Activated CD4-positive, alpha-beta memory T cell treated with anti-CD3 and anti-CD28 coated beads, Interleukin-2, amount 10 ng/mL, durations not matched to agents 7 days and 5 days (primary cell): ENCODE measurements at regions of chr15 and their contacts with region 1.

Region 1: GRCh38 chr15:99104788-99105513 is at the start of gene SYNM:
- DNase-seq: peak; percentile 47
- H3K4me3 Mint-ChIP-seq: peak within 1 kb of the TSS; percentile 66
- H3K27ac Mint-ChIP-seq: no peak within 1 kb of the TSS
- H3K4me1 Mint-ChIP-seq: peaks cover 40% of the 10 kb centered on the region
- H3K27me3 Mint-ChIP-seq: peaks cover 43% of the 10 kb centered on the region
- total RNA-seq, gene SYNM: 5.5 to 5.7 TPM

Region 2: GRCh38 chr15:99076552-99077308 is 28.2 kb before region 1 on chr15:
- CTCF ChIA-PET with region 1: interaction called, 10 read pairs
- POLR2A ChIA-PET with region 1: no interaction called
- DNase-seq: peak; percentile 52
- H3K4me3 Mint-ChIP-seq: peak overlapping the region; percentile 77
- H3K27ac Mint-ChIP-seq: no peak overlapping the region
- H3K4me1 Mint-ChIP-seq: peaks cover 7% of the 10 kb centered on the region
- H3K27me3 Mint-ChIP-seq: peaks cover 14% of the 10 kb centered on the region

Region 3: GRCh38 chr15:99135194-99135593 is 30.2 kb after region 1 on chr15:
- CTCF ChIA-PET with region 1: no interaction called
- POLR2A ChIA-PET with region 1: no interaction called
- DNase-seq: no peak
- H3K4me3 Mint-ChIP-seq: no peak overlapping the region
- H3K27ac Mint-ChIP-seq: no peak overlapping the region
- H3K4me1 Mint-ChIP-seq: peaks cover 8% of the 10 kb centered on the region
- H3K27me3 Mint-ChIP-seq: no peaks in the 10 kb centered on the region

Region 4: GRCh38 chr15:99207672-99208071 is 102.7 kb after region 1 on chr15:
- CTCF ChIA-PET with region 1: interaction called, 19 read pairs
- POLR2A ChIA-PET with region 1: no interaction called
- DNase-seq: no peak
- H3K4me3 Mint-ChIP-seq: no peak overlapping the region
- H3K27ac Mint-ChIP-seq: no peak overlapping the region
- H3K4me1 Mint-ChIP-seq: no peaks in the 10 kb centered on the region
- H3K27me3 Mint-ChIP-seq: peaks cover 11% of the 10 kb centered on the region

Region 5: DNA sequence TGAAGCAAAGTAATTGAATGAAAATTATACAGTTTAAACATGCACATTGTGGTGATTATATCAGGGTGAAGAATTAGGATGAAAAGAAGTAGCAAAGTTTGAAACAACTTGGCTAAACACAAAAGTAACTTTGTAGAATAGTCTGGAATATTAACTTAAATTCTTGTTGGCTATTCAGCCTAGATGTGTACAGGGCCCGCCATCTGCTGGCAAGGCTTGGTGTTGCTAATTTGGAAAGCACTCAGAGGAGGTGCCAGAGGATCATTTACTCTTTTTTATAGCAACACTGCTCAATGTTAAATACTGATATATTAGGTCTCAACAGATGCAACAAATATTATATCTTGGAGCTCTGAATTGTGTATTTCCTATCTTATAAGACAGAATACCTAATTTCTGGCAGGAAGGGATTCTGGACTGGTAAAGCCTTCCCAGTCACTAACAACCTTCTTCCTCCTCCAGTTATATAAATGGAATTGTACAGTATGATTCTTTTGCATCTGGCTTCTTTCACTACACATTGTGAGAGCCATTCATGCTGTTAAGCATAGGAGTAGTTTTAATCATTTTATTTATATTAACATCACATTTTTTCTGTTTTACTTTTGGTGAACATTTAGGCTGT is 108.3 kb after region 1 on chr15:
- CTCF ChIA-PET with region 1: interaction called, 19 read pairs
- POLR2A ChIA-PET with region 1: no interaction called
- DNase-seq: peak; percentile 73
- H3K4me3 Mint-ChIP-seq: no peak overlapping the region
- H3K27ac Mint-ChIP-seq: no peak overlapping the region
- H3K4me1 Mint-ChIP-seq: no peaks in the 10 kb centered on the region
- H3K27me3 Mint-ChIP-seq: no peaks in the 10 kb centered on the region